ENCODE measurements at regions of chr3 and their contacts with region 1.

Region 1: DNA sequence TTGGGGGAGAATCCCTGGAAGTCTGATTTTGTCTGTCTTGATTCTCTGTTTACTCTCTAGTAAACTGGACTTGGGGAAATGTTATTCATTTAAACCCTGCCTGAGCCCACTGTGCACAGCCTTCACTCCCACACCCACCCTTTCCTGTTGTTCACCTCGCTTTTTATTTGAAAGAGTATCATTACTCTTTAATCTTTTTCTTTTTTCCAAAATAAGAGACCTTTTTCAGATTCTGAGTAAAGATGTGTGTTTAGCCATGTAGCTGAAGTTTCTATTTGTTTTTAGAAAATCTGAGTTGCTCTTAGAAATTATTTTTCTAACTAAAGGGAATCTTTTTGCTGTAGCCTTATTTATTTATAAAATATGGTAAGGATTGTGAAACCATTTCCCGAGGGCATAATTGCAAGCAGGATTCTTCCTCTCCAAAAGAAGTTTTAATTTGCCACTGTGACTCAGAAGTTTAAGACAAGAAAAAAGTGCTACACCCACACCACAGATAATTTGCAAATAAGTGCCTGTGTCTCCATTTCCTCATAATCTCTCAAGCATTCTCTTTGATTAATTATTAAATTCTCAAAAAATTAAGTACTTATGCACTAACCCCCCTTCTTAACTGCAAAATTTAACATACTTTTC is 43.4 kb downstream of the RASA2 start:
- DNase-seq: peak; percentile 23
- H3K4me3 Mint-ChIP-seq: no peak overlapping the region
- H3K27ac Mint-ChIP-seq: peak overlapping the region; percentile 35
- H3K4me1 Mint-ChIP-seq: peaks cover 71% of the 10 kb centered on the region
- H3K27me3 Mint-ChIP-seq: no peaks in the 10 kb centered on the region

Region 2: GRCh38 chr3:141266797-141267555 is 263.3 kb before region 1 on chr3:
- CTCF ChIA-PET with region 1: no interaction called
- intact Hi-C with region 1: no loop called
- DNase-seq: peak; percentile 52
- H3K4me3 Mint-ChIP-seq: peak overlapping the region; percentile 78
- H3K27ac Mint-ChIP-seq: peak overlapping the region; percentile 86
- H3K4me1 Mint-ChIP-seq: peaks cover 35% of the 10 kb centered on the region
- H3K27me3 Mint-ChIP-seq: no peaks in the 10 kb centered on the region

Region 3: DNA sequence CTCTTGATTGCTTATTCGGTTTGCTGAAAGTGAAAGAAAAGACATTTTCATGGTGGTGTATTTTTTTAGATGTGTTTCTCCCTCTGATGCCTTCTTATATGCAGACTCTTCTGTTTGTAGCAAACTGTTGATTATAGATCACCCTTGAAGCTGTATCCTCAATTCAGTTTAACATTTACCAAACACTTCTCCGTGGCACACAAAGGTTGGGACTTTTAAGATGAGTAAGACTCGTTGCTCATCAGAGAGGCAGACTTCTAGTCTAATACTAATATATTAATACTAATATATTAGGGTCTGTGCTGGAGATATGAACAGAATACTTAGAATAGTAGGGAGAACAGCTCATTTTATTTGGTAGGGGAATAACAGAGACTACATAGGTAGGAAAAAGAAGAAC is 10.7 kb before region 1 on chr3:
- CTCF ChIA-PET with region 1: interaction called, 12 read pairs
- intact Hi-C with region 1: loop called (anchors 1 kb)
- DNase-seq: no peak
- H3K4me3 Mint-ChIP-seq: no peak overlapping the region
- H3K27ac Mint-ChIP-seq: peak overlapping the region; percentile 41
- H3K4me1 Mint-ChIP-seq: peaks cover 55% of the 10 kb centered on the region
- H3K27me3 Mint-ChIP-seq: no peaks in the 10 kb centered on the region

Region 4: GRCh38 chr3:141542989-141543388 is 12.7 kb after region 1 on chr3:
- CTCF ChIA-PET with region 1: no interaction called
- intact Hi-C with region 1: loop called (anchors 1 kb)
- DNase-seq: no peak
- H3K4me3 Mint-ChIP-seq: no peak overlapping the region
- H3K27ac Mint-ChIP-seq: no peak overlapping the region
- H3K4me1 Mint-ChIP-seq: peaks cover 66% of the 10 kb centered on the region
- H3K27me3 Mint-ChIP-seq: no peaks in the 10 kb centered on the region